ENCODE measurements at regions of chr6 and their contacts with region 1.

Region 1: GRCh38 chr6:151330134-151330696 is 61.1 kb downstream of the ZBTB2 start:
- DNase-seq: no peak
- H3K4me3 ChIP-seq: no peak overlapping the region
- H3K27ac ChIP-seq: no peak overlapping the region
- H3K4me1 ChIP-seq: peaks cover 0 to 2% of the 10 kb centered on the region in 2 donors
- H3K27me3 ChIP-seq: no peaks in the 10 kb centered on the region
- CTCF ChIP-seq: no peak
- POLR2A ChIP-seq: no peak

Region 2: DNA sequence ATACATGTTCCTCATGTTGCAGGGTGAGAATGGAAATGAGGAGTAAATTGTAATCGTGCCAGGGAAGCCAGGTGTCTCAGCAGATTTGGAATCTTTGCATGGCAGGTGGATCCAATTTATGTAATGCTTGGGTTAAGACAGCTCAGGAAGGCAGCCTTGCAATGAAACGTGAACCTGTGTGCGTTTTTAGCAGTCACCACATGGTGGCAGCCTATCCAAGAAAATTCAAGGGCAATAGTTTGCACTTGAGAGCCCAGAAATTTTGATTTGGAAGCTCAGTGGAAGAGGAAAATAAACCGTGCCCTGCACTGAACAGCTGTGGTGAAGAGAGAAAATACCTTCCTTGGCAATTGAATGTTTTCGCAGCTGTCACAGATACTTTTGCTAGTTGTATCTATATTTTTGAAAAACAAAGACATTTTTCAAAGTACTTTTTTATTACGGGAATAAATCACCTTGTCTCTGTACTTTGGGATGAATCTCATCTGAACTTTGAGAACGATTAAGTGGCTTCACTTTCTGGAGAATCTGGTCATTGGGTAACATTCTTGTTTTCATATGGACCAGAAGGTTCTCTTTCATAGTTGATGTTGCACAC is 438.2 kb before region 1 on chr6:
- intact Hi-C with region 1: loop called (anchors 10 kb)
- DNase-seq: peak; percentile 56 to 65
- H3K4me3 ChIP-seq: no peak overlapping the region
- H3K27ac ChIP-seq: no peak overlapping the region
- H3K4me1 ChIP-seq: peaks cover 0 to 4% of the 10 kb centered on the region in 2 donors
- H3K27me3 ChIP-seq: no peaks in the 10 kb centered on the region
- CTCF ChIP-seq: peak; percentile 73 to 85 (median 77)
- POLR2A ChIP-seq: no peak

Measured in breast epithelium (tissue), 4 donors.